IMR-90 (cell line): ENCODE measurements at regions of chr16 and their contacts with region 1.

Region 1: GRCh38 chr16:55465077-55465896 is 13.7 kb upstream of the MMP2 start:
- DNase-seq: peak; percentile 79
- ATAC-seq: peak; percentile 97
- H3K4me3 ChIP-seq: no peak overlapping the region
- H3K27ac ChIP-seq: no peak overlapping the region
- H3K4me1 ChIP-seq: peaks cover under 1% of the 10 kb centered on the region; the same call in 1 of the 2 replicates
- H3K27me3 ChIP-seq: peaks cover 10% of the 10 kb centered on the region
- CTCF ChIP-seq: peak; percentile 100
- POLR2A ChIP-seq: peak; percentile 80
- RAD21 ChIP-seq: peak; percentile 100

Region 2: GRCh38 chr16:53549970-53550690 is 1915.2 kb before region 1 on chr16:
- CTCF ChIA-PET with region 1: interaction called, 4 read pairs
- POLR2A ChIA-PET with region 1: no interaction called
- dilution Hi-C with region 1: no loop called
- in situ Hi-C with region 1: no loop called
- intact Hi-C with region 1: loop called (anchors 1 kb)
- DNase-seq: peak; percentile 82
- ATAC-seq: peak; percentile 95
- H3K4me3 ChIP-seq: no peak overlapping the region
- H3K27ac ChIP-seq: no peak overlapping the region
- H3K4me1 ChIP-seq: no peaks in the 10 kb centered on the region; the same call in 1 of the 2 replicates
- H3K27me3 ChIP-seq: peaks cover 46% of the 10 kb centered on the region
- CTCF ChIP-seq: peak; percentile 92
- POLR2A ChIP-seq: 0 out of 2 replicates have a peak, but pooled peaks have one; percentile 33
- RAD21 ChIP-seq: peak; percentile 92

Region 3: DNA sequence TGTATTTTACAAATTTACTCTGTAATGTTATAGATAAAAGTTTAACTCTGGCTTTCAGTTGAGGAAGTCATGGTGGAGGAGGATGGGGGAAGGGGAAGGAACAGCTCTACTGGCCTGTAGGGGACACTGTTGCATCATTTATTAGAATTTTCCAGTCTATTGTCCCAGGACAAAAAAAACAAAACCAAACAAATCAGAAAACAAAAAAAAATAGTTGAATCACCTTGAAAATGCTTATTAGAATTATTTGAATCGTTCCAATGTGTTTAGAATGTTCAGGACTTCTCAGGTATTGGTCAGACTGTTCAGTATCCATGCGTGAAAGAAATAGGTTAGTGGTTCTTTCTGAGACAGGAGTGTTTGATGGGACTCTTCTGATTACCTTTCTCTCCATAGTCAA is 1519.3 kb before region 1 on chr16:
- CTCF ChIA-PET with region 1: no interaction called
- POLR2A ChIA-PET with region 1: no interaction called
- dilution Hi-C with region 1: no loop called
- in situ Hi-C with region 1: no loop called
- intact Hi-C with region 1: loop called (anchors 1 kb)
- DNase-seq: peak; percentile 64
- ATAC-seq: peak; percentile 74
- H3K4me3 ChIP-seq: no peak overlapping the region
- H3K27ac ChIP-seq: no peak overlapping the region
- H3K4me1 ChIP-seq: peaks cover 2% of the 10 kb centered on the region; the same call in 1 of the 2 replicates
- H3K27me3 ChIP-seq: no peaks in the 10 kb centered on the region
- CTCF ChIP-seq: peak; percentile 89
- POLR2A ChIP-seq: no peak
- RAD21 ChIP-seq: peak; percentile 90

Region 4: GRCh38 chr16:55379876-55380390 is 85.4 kb before region 1 on chr16:
- CTCF ChIA-PET with region 1: no interaction called
- POLR2A ChIA-PET with region 1: no interaction called
- dilution Hi-C with region 1: no loop called
- in situ Hi-C with region 1: no loop called
- intact Hi-C with region 1: no loop called
- DNase-seq: no peak
- ATAC-seq: no peak
- H3K4me3 ChIP-seq: no peak overlapping the region
- H3K27ac ChIP-seq: no peak overlapping the region
- H3K4me1 ChIP-seq: no peaks in the 10 kb centered on the region
- H3K27me3 ChIP-seq: no peaks in the 10 kb centered on the region; the same call in 1 of the 2 replicates
- CTCF ChIP-seq: no peak
- POLR2A ChIP-seq: no peak
- RAD21 ChIP-seq: no peak

Region 5: GRCh38 chr16:55543472-55543871 is 78.2 kb after region 1 on chr16:
- CTCF ChIA-PET with region 1: interaction called, 26 read pairs
- POLR2A ChIA-PET with region 1: no interaction called
- dilution Hi-C with region 1: no loop called
- in situ Hi-C with region 1: loop called (anchors 5 kb)
- intact Hi-C with region 1: loop called (anchors 1 kb)
- DNase-seq: peak; percentile 41
- ATAC-seq: peak; percentile 67
- H3K4me3 ChIP-seq: no peak overlapping the region
- H3K27ac ChIP-seq: no peak overlapping the region
- H3K4me1 ChIP-seq: peaks cover 6% of the 10 kb centered on the region
- H3K27me3 ChIP-seq: no peaks in the 10 kb centered on the region
- CTCF ChIP-seq: peak; percentile 59
- POLR2A ChIP-seq: no peak
- RAD21 ChIP-seq: peak; percentile 64

Region 6: DNA sequence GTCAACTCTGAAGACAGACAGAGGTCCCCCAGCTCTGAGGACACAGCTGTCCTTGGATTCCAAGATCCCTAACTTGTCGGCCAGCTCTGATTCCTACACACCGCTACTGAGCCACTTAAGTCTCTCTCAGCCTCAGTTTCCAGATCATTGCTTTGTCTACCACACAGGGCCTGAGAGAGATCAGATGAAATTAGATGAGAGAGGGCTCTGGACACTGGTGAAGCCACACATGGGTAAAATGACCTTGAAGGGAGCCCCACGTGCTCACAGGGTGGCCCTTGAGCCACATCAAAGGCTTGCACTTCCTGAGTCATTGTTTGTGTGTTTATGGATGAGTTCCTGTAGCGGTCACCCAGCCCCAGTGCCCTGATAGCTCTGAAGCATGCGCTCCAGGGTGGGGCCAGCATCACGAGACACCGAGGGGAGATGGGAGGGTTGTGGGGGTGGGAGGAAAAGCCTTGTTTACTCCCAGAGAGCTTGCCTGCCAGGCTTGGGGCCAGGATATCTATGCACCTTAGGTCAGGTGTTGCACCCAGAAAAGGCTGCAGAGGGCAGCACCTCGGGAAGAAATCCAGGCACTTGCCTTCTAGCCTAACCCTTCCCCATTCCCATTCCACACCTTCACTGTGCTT is 157.8 kb after region 1 on chr16:
- CTCF ChIA-PET with region 1: no interaction called
- POLR2A ChIA-PET with region 1: no interaction called
- dilution Hi-C with region 1: no loop called
- in situ Hi-C with region 1: no loop called
- intact Hi-C with region 1: no loop called
- DNase-seq: no peak
- ATAC-seq: no peak
- H3K4me3 ChIP-seq: no peak overlapping the region
- H3K27ac ChIP-seq: no peak overlapping the region
- H3K4me1 ChIP-seq: no peaks in the 10 kb centered on the region
- H3K27me3 ChIP-seq: peaks cover 7% of the 10 kb centered on the region
- CTCF ChIP-seq: 0 out of 2 replicates have a peak, but pooled peaks have one; percentile 3
- POLR2A ChIP-seq: no peak
- RAD21 ChIP-seq: no peak

Region 7: DNA sequence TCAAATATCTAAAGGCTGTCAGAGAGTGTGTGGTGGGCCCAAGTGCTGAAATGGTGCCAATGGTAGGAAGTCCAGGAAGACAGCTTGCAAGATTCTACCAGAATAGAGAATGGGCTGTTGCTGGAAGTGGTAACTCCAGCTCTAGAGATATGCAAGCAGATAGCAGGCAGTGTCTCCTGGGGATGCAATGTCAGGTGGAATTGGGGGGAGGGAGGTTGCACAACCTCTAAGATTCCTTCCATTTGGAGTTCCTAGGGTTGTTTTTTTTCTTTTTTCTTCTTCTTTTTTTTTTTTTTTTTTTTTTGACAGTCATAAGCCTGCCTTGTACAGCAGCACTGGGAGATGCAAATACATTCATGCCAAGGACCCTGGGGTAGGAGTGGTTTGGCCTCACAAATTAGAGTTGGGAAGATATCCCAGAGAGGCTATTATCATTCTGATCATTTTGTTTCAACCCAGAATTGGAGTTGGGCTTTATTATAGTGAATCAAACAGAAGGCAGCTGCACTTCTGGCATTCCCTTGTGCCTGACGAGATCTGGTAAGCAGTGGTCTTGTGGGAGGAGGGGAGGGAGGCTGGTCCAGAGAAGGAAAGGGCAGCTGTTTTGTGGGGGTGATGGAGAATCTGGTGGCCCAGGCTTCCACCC is 241.6 kb after region 1 on chr16:
- CTCF ChIA-PET with region 1: interaction called, 25 read pairs
- POLR2A ChIA-PET with region 1: no interaction called
- dilution Hi-C with region 1: no loop called
- in situ Hi-C with region 1: loop called (anchors 5 kb)
- intact Hi-C with region 1: loop called (anchors 1 kb)
- DNase-seq: no peak
- ATAC-seq: no peak
- H3K4me3 ChIP-seq: no peak overlapping the region
- H3K27ac ChIP-seq: no peak overlapping the region
- H3K4me1 ChIP-seq: no peaks in the 10 kb centered on the region
- H3K27me3 ChIP-seq: peaks cover 12% of the 10 kb centered on the region
- CTCF ChIP-seq: no peak
- POLR2A ChIP-seq: no peak
- RAD21 ChIP-seq: no peak

Region 8: GRCh38 chr16:56317998-56318826 is 852.9 kb after region 1 on chr16:
- CTCF ChIA-PET with region 1: no interaction called
- POLR2A ChIA-PET with region 1: no interaction called
- dilution Hi-C with region 1: no loop called
- in situ Hi-C with region 1: loop called (anchors 25 kb)
- intact Hi-C with region 1: no loop called
- DNase-seq: peak; percentile 70
- ATAC-seq: peak; percentile 100
- H3K4me3 ChIP-seq: no peak overlapping the region
- H3K27ac ChIP-seq: no peak overlapping the region
- H3K4me1 ChIP-seq: no peaks in the 10 kb centered on the region
- H3K27me3 ChIP-seq: peaks cover 28% of the 10 kb centered on the region
- CTCF ChIP-seq: peak; percentile 97
- POLR2A ChIP-seq: peak; percentile 55; the same call in 1 of the 2 replicates
- RAD21 ChIP-seq: peak; percentile 100